Common myeloid progenitor, CD34-positive (primary cell): ENCODE measurements at regions of chr14 and their contacts with region 1.

Region 1: GRCh38 chr14:22099942-22100763 is 426.5 kb upstream of the OR4E1 start:
- DNase-seq: peak; percentile 90 to 94 (median 92)
- H3K4me3 ChIP-seq: no peak overlapping the region
- H3K27ac ChIP-seq: no peak overlapping the region
- H3K4me1 ChIP-seq: peaks cover 24 to 56% (median 51%) of the 10 kb centered on the region in 4 experiments
- H3K27me3 ChIP-seq: no peaks in the 10 kb centered on the region

Region 2: DNA sequence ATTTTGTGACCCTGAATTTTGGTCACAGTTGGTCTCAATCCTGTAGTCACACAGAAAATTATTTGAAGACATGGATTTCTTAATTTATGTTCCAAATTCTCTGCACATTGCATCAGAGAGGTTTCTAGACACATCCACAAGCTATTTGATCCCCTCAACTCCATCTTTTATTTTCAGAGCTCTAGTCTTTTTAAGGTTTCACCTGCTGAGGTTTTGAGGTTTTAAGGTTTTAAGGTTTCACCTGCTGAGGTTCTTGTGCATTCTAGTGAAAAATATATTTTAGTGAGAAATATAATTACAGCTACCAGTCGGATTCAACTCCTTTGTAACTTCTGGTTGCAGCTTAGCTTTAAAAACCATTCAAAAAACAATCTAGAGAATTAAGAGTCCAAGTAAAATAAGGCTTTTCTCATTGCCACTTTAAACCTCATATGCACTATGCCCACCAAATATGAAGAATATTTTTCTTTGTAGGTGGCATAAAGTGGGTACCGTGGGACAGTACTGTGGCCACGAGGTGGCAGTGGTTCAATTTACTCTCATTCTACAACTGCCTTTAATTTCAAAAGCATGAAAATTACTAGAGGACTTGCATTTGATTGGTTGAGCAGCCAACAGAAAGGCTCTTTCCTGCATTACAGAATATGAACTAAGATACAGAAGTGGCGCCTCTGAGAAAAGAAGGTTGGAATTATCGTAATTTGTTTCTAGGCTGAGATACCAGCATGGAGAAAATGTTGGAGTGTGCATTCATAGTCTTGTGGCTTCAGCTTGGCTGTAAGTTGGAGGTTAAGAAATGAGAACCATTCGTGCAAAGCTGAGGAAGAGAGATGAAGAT is 60.0 kb before region 1 on chr14:
- CTCF ChIA-PET with region 1: interaction called, 80 read pairs
- POLR2A ChIA-PET with region 1: no interaction called
- DNase-seq: peak; percentile 64 to 83 (median 81)
- H3K4me3 ChIP-seq: peak overlapping the region in 1 of 7 experiments; percentile 37
- H3K27ac ChIP-seq: no peak overlapping the region
- H3K4me1 ChIP-seq: peaks cover 0 to 4% (median 2%) of the 10 kb centered on the region in 4 experiments
- H3K27me3 ChIP-seq: no peaks in the 10 kb centered on the region

Region 3: GRCh38 chr14:22052795-22053194 is 47.4 kb before region 1 on chr14:
- CTCF ChIA-PET with region 1: interaction called, 80 read pairs
- POLR2A ChIA-PET with region 1: no interaction called
- DNase-seq: peak in 1 of 3 donors; percentile 28
- H3K4me3 ChIP-seq: peak overlapping the region in 1 of 7 experiments; percentile 17
- H3K27ac ChIP-seq: no peak overlapping the region
- H3K4me1 ChIP-seq: peaks cover 2 to 33% (median 22%) of the 10 kb centered on the region in 4 experiments
- H3K27me3 ChIP-seq: no peaks in the 10 kb centered on the region

Region 4: DNA sequence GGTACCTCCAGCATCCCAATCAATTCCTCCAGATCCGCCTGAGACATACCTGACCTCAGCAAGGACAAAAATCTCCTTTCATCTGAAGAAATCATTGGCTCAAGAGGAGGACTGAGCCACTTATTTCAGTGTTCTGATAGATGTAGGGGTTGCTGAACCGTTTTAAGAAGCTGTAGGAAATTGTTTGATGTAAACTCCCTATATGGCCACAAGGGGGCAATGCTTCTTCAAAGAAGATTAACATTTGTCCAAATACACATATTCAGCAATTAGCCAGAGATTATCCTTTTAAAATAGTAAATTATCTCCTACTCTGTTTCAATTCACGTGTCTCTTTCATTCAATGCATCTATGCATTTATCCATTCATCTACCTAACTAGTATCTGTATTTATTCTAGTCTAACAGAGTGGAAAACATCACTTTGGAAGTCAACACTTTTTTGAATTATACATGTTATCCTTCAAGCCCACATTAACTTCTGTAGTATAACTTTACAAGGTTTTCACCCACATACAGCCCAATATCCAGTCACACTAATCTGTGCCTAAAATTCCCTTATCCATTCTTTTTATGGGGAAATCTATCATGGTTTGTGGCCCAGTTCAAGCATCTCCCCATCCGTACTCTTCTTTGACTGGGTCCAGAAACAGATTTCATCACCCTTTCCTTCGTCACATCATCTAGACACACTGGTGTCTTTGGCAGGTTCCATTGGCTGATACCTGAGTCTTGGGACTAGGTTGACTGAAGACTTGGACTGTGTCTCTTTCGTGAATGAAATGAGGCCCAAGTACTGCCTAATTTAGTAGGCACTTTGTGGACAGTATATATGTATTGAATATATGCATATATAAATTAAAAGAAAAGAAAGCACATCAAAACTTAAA is 15.5 kb before region 1 on chr14:
- CTCF ChIA-PET with region 1: interaction called, 50 read pairs
- POLR2A ChIA-PET with region 1: interaction called, 4 read pairs
- DNase-seq: peak; percentile 71 to 86 (median 78)
- H3K4me3 ChIP-seq: no peak overlapping the region
- H3K27ac ChIP-seq: no peak overlapping the region
- H3K4me1 ChIP-seq: peaks cover 0 to 10% (median 5%) of the 10 kb centered on the region in 4 experiments
- H3K27me3 ChIP-seq: no peaks in the 10 kb centered on the region

Region 5: GRCh38 chr14:22303589-22304195 is 203.5 kb after region 1 on chr14:
- CTCF ChIA-PET with region 1: no interaction called
- POLR2A ChIA-PET with region 1: no interaction called
- DNase-seq: peak; percentile 20 to 47 (median 45)
- H3K4me3 ChIP-seq: no peak overlapping the region
- H3K27ac ChIP-seq: no peak overlapping the region
- H3K4me1 ChIP-seq: no peaks in the 10 kb centered on the region
- H3K27me3 ChIP-seq: peaks cover 0 to 2% (median 0%) of the 10 kb centered on the region in 5 experiments

Region 6: DNA sequence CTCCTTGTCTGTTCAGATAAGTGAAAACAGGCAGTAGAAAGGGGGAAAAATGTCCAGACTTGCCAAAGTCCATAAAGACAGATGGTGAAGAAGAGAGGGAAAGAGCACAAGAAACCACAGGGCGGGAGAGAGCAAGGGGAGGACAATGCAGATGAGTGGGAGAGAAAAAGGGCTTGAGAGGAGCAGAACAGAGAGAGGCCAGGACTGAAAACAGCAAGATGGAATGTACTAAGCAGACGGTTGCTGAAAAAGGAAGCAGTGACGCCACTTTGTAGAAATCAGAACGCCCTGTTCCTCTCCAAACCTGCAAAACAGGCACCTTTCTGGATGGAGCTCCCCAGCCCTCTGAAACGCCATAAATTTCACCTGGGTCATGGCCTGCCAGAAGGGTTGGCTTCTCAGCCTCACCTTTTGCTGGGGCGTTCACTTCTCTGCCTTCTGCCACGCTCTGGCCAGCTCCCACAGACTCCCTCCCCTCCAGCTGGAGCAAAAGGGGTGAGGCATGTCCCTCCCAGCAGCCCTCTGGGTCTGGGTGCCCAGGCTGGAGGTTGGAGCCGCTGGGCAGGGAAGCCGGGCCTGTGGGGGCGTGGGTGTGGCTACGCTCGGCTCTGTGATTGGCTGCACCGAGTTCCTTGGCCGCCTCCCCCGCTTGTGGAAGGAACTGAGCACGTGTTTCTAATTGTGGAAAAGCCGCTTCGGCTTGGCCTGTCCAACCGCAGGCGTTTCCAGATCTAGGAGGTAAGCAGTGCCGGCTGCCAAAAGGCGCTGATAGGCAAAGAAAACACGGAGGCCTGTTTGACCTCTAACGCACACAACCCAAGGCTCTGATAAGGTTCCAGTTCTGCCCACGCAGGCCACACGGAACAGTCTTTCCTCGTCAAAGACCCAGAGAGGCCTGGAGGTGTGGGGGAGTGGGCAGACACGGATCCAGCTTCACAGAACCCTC is 1054.0 kb after region 1 on chr14:
- CTCF ChIA-PET with region 1: no interaction called
- POLR2A ChIA-PET with region 1: no interaction called
- DNase-seq: peak in 1 of 3 donors; percentile 5
- H3K4me3 ChIP-seq: no peak overlapping the region
- H3K27ac ChIP-seq: peak overlapping the region in 1 of 2 experiments; percentile 22
- H3K4me1 ChIP-seq: peaks cover 0 to 8% (median 2%) of the 10 kb centered on the region in 4 experiments
- H3K27me3 ChIP-seq: no peaks in the 10 kb centered on the region